Endothelial cell of umbilical vein (primary cell): ENCODE measurements at regions of chr17 and their contacts with region 1.

Region 1: DNA sequence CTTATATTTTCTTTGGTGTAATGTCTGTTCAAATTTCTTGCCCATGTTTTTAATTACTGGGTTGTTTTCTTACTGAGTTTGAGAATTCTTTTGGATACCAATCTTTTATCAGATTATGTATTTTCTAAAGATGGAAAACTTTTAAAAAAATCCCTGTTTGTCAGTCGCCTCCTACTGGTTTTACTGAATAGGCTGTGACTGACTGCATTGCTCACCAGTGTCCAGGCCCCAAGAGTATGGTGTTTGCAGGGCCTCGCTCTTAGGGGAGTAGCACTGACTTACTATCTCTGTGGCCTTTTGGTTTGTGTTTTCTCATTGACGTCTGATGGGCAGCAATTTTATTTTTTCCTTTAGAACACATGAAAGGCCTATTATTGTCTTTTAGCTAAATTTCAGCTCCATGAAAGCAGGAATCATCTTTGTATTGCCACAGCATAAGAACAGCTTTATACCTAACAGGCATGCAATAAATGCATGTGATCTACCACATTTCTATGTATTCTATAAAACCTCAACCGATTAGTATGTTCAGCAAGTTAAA is 188.4 kb downstream of the AATF start:
- DNase-seq: no peak
- H3K4me3 ChIP-seq: no peak overlapping the region
- H3K27ac ChIP-seq: no peak overlapping the region
- H3K4me1 ChIP-seq: no peaks in the 10 kb centered on the region
- H3K27me3 ChIP-seq: no peaks in the 10 kb centered on the region
- CTCF ChIP-seq: no peak
- POLR2A ChIP-seq: no peak

Region 2: DNA sequence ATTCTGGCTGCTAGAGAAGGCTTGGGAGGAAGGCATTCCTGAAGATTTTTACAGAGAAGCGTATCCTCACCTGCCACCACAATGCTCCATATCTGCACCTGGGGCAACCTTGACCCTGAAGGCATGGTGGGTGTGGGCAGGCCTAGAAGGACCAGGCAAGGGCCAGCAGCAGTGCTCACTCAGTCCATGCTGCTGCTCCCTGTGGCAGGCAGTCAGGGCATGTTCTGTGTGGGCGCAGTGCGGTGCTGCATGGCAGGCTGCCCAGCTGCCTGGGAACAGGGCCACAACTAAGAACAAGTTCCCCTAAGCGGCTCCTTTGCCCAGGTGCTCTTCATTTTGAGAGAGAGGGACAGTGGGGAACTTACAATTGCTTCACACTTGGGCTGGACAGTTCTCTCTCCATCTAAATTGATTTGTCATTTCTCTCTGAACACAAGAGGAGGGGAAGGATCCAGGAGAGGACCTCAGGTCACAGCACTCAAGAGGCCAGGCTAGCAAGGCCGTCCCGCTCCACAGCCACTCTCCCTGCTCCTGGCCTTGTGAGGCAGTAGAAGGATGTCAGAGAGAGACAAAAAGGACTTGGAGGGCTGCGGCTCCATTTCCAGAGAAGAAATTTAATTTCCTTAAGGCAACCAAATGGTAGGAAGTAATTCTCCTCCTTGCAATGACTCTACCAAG is 29.6 kb before region 1 on chr17:
- CTCF ChIA-PET with region 1: no interaction called
- POLR2A ChIA-PET with region 1: no interaction called
- dilution Hi-C with region 1: no loop called
- intact Hi-C with region 1: no loop called
- DNase-seq: no peak
- H3K4me3 ChIP-seq: no peak overlapping the region
- H3K27ac ChIP-seq: no peak overlapping the region
- H3K4me1 ChIP-seq: peaks cover 4% of the 10 kb centered on the region
- H3K27me3 ChIP-seq: no peaks in the 10 kb centered on the region
- CTCF ChIP-seq: no peak
- POLR2A ChIP-seq: no peak

Region 3: GRCh38 chr17:37123941-37124820 is 13.0 kb before region 1 on chr17:
- CTCF ChIA-PET with region 1: interaction called, 14 read pairs
- POLR2A ChIA-PET with region 1: no interaction called
- dilution Hi-C with region 1: no loop called
- intact Hi-C with region 1: no loop called
- DNase-seq: no peak
- H3K4me3 ChIP-seq: no peak overlapping the region
- H3K27ac ChIP-seq: no peak overlapping the region
- H3K4me1 ChIP-seq: no peaks in the 10 kb centered on the region
- H3K27me3 ChIP-seq: no peaks in the 10 kb centered on the region
- CTCF ChIP-seq: no peak
- POLR2A ChIP-seq: no peak

Region 4: GRCh38 chr17:37206299-37206698 is 69.2 kb after region 1 on chr17:
- CTCF ChIA-PET with region 1: interaction called, 4 read pairs
- POLR2A ChIA-PET with region 1: no interaction called
- dilution Hi-C with region 1: no loop called
- intact Hi-C with region 1: loop called (anchors 5 kb)
- DNase-seq: no peak
- H3K4me3 ChIP-seq: no peak overlapping the region
- H3K27ac ChIP-seq: no peak overlapping the region
- H3K4me1 ChIP-seq: no peaks in the 10 kb centered on the region
- H3K27me3 ChIP-seq: no peaks in the 10 kb centered on the region
- CTCF ChIP-seq: no peak
- POLR2A ChIP-seq: no peak